ENCODE measurements at regions of chr7 and their contacts with region 1.

Region 1: DNA sequence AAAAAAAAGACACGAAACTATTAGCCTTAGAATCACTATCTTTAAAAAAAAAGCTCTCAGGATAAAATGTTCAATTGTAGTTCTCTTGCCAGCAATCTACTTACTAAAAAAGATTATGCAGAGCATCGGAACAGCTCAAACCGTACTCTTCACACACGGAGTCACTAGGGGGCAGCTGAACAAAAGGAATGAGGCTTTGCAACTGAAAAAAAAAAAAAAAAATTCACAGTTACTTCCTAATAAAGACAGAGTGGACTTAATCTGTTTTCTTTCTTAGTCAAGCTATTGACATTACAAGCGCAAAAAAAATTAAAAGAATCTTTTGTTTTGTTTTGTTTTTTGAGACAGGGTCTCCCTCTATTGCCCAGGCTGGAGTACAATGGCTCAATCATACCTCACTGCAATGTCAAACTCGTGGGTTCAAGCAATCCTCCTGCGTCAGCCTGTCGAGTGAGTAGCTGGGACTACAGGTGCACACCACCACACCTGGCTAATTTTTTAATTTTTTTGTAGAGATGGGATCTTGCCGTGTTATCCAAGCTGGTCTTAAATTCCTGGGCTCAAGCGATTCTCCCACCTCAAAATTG is 11.5 kb downstream of the PMS2 start:
- DNase-seq: peak; percentile 74
- ATAC-seq: peak; percentile 67
- H3K4me3 ChIP-seq: no peak overlapping the region
- H3K4me3 Mint-ChIP-seq: no peak overlapping the region
- H3K27ac ChIP-seq: no peak overlapping the region
- H3K27ac Mint-ChIP-seq: no peak overlapping the region
- H3K4me1 ChIP-seq: no peaks in the 10 kb centered on the region
- H3K4me1 Mint-ChIP-seq: peaks cover 2% of the 10 kb centered on the region
- H3K27me3 ChIP-seq: no peaks in the 10 kb centered on the region
- H3K27me3 Mint-ChIP-seq: no peaks in the 10 kb centered on the region
- CTCF ChIP-seq: peak; percentile 77

Region 2: DNA sequence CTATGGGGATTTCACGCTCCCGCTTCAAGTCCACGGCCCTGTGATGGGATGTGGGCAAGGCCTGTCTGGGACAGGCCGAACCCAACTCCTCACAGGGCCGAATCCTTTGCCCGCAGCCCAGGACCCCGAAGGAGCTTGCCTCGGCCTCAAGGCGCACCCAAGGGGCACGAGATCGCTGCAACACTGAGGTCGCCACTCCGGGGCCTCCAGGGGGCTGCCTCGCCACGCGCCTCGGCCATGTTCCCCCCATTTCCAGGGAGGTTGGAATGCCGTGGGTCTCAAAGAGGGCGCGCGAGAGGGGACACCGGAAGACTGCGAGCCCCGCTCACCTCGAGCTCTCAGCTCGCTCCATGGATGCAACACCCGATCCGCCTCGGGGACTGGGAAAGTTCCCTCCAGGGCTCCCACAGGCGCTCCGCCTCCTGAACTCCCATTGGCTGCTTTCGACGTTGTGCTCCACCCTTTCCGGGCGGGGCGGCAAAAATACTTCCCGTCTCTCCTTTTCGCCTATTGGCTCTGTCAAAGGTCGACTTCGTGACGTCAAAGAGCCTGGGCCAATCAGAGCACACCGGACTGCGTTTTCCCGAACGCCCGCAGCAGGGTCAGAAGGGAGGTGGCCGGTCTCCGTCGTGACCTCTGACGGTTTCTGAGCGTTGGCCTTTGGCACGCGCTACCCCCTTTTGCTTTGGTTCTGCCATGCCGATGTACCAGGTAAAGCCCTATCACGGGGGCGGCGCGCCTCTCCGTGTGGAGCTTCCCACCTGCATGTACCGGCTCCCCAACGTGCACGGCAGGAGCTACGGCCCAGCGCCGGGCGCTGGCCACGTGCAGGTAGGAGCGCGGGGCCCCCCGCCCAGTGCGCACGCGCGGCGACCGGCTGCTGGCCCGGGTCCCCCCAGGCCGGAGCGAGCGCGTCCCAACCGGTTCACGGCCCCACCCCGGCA is 11.6 kb after region 1 on chr7 and contains the starts of genes AIMP2 and PMS2:
- CTCF ChIA-PET with region 1: interaction called, 29 read pairs
- POLR2A ChIA-PET with region 1: no interaction called
- intact Hi-C with region 1: loop called (anchors 1 kb)
- DNase-seq: peak; percentile 96
- ATAC-seq: peak; percentile 90
- H3K4me3 ChIP-seq: peak within 1 kb of the TSS; percentile 47 to 93 (median 85)
- H3K4me3 Mint-ChIP-seq: peak within 1 kb of the TSS; percentile 94
- H3K27ac ChIP-seq: peak within 1 kb of the TSS; percentile 80 to 86
- H3K27ac Mint-ChIP-seq: peak within 1 kb of the TSS; percentile 93
- H3K4me1 ChIP-seq: peaks cover 3 to 9% of the 10 kb centered on the region in 2 donors
- H3K4me1 Mint-ChIP-seq: peaks cover 34% of the 10 kb centered on the region
- H3K27me3 ChIP-seq: no peaks in the 10 kb centered on the region
- H3K27me3 Mint-ChIP-seq: no peaks in the 10 kb centered on the region
- CTCF ChIP-seq: peak; percentile 33
- total RNA-seq, gene AIMP2: 11.7 and 13.1 TPM in 2 replicates
- total RNA-seq, gene PMS2: 20.3 and 22.5 TPM in 2 replicates

Region 3: DNA sequence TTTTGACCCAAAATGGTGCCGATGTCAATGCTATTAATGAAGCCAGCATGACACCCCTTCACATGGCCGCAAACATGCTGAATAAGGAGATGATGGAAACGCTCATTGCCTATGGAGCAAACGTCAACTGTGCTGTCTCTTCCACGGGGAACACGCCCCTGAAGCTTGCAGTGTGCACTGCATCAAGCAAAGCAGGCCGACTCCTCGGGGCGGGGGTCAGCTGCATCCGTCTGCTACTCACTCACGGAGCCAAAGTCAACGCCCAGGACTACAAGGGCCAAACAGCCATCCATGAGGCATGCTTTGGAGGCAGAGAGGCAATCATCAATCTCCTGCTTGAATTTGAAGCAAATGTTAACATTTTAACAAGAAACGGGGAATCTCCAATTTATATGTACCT is 38.4 kb after region 1 on chr7:
- CTCF ChIA-PET with region 1: interaction called, 7 read pairs
- POLR2A ChIA-PET with region 1: interaction called, 10 read pairs
- intact Hi-C with region 1: no loop called
- DNase-seq: no peak
- ATAC-seq: no peak
- H3K4me3 ChIP-seq: no peak overlapping the region
- H3K4me3 Mint-ChIP-seq: no peak overlapping the region
- H3K27ac ChIP-seq: no peak overlapping the region
- H3K27ac Mint-ChIP-seq: no peak overlapping the region
- H3K4me1 ChIP-seq: no peaks in the 10 kb centered on the region
- H3K4me1 Mint-ChIP-seq: no peaks in the 10 kb centered on the region
- H3K27me3 ChIP-seq: no peaks in the 10 kb centered on the region
- H3K27me3 Mint-ChIP-seq: no peaks in the 10 kb centered on the region
- CTCF ChIP-seq: no peak

Region 4: DNA sequence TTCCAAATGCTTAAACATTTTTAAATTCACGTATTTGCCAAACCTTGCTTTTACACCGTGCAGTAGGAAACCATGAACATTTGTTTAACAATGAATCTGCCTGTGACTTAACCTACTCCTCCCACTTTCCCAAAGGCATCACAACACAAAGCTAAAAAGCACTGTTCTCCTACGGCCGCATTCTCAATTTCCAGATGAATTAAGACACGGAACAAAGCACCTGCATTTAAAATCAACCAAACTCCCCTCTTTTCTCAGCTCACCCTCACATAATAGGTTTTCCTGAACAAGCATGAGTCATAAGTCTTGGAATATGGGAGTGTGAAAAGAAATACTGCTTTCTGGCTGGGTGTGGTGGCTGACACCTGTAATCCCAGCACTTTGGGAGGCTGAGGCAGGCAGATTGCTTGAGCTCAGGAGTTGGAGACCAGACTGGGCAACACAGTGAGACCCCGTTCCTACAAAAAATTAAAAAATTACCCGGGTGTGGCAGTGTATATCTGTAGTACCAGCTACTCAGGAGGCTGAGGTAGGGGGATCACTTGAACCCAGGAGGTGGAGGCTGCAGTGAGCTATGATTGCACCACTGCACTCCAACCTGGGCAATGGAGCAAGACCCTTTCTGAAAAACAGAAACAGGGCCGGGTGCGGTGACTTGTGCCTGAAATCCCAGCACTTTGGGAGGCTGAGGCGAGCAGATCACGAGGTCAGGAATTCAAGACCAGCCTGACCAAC is 326.8 kb after region 1 on chr7:
- CTCF ChIA-PET with region 1: interaction called, 121 read pairs
- POLR2A ChIA-PET with region 1: no interaction called
- intact Hi-C with region 1: loop called (anchors 1 kb)
- DNase-seq: no peak
- ATAC-seq: no peak
- H3K4me3 ChIP-seq: no peak overlapping the region
- H3K4me3 Mint-ChIP-seq: no peak overlapping the region
- H3K27ac ChIP-seq: no peak overlapping the region
- H3K27ac Mint-ChIP-seq: no peak overlapping the region
- H3K4me1 ChIP-seq: peaks cover 0 to 3% of the 10 kb centered on the region in 2 donors
- H3K4me1 Mint-ChIP-seq: peaks cover 4% of the 10 kb centered on the region
- H3K27me3 ChIP-seq: no peaks in the 10 kb centered on the region
- H3K27me3 Mint-ChIP-seq: no peaks in the 10 kb centered on the region
- CTCF ChIP-seq: no peak

Region 5: GRCh38 chr7:6435486-6436384 is 438.4 kb after region 1 on chr7:
- CTCF ChIA-PET with region 1: interaction called, 21 read pairs
- POLR2A ChIA-PET with region 1: no interaction called
- intact Hi-C with region 1: loop called (anchors 1 kb)
- DNase-seq: peak; percentile 89
- ATAC-seq: peak; percentile 95
- H3K4me3 ChIP-seq: peak overlapping the region; percentile 20 to 57 (median 50)
- H3K4me3 Mint-ChIP-seq: peak overlapping the region; percentile 72
- H3K27ac ChIP-seq: peak overlapping the region; percentile 14 to 70
- H3K27ac Mint-ChIP-seq: peak overlapping the region; percentile 79
- H3K4me1 ChIP-seq: peaks cover 26 to 40% of the 10 kb centered on the region in 2 donors
- H3K4me1 Mint-ChIP-seq: peaks cover 39% of the 10 kb centered on the region
- H3K27me3 ChIP-seq: no peaks in the 10 kb centered on the region
- H3K27me3 Mint-ChIP-seq: no peaks in the 10 kb centered on the region
- CTCF ChIP-seq: peak; percentile 92

Region 6: GRCh38 chr7:6675807-6676405 is 678.6 kb after region 1 on chr7:
- CTCF ChIA-PET with region 1: no interaction called
- POLR2A ChIA-PET with region 1: no interaction called
- intact Hi-C with region 1: no loop called
- DNase-seq: no peak
- ATAC-seq: no peak
- H3K4me3 ChIP-seq: no peak overlapping the region
- H3K4me3 Mint-ChIP-seq: no peak overlapping the region
- H3K27ac ChIP-seq: no peak overlapping the region
- H3K27ac Mint-ChIP-seq: no peak overlapping the region
- H3K4me1 ChIP-seq: no peaks in the 10 kb centered on the region
- H3K4me1 Mint-ChIP-seq: no peaks in the 10 kb centered on the region
- H3K27me3 ChIP-seq: no peaks in the 10 kb centered on the region
- H3K27me3 Mint-ChIP-seq: no peaks in the 10 kb centered on the region
- CTCF ChIP-seq: no peak

Measured in B cell (primary cell).